Tibial artery (tissue), 4 donors: ENCODE measurements at regions of chr10 and their contacts with region 1.

Region 1: DNA sequence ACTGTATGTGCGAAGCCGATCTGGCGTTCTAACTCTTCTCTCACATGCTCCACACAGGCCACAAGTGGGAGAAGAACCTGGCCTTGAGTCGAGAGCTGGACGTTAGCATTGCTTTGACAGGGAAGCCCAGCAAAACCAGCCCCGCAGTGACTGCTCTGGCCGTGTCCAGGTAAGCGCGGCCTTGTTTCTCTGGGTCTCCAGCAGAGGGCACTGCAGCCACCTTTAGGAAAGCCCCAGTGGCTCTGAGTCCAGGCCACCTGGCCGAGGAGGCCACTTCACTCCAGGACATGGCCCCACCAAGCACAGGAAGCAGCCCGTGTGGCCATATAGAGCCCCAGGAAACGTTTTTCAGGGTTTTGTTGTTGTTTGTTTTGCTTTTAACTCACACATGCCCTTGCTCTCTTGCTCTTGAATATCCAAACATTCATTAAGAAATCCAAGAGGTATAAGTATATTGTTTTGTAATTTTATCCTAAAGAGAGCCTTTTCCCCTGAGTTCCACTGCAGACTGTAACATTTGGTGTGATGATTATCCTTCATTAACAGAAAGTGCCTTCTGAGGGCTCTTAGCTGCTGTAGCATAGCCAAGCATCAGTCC is 41.8 kb upstream of the LRRC18 start:
- DNase-seq: peak; percentile 46 to 74
- H3K4me3 ChIP-seq: no peak overlapping the region
- H3K27ac ChIP-seq: no peak overlapping the region
- H3K4me1 ChIP-seq: no peaks in the 10 kb centered on the region
- H3K27me3 ChIP-seq: no peaks in the 10 kb centered on the region
- CTCF ChIP-seq: peak; percentile 78 to 83

Region 2: DNA sequence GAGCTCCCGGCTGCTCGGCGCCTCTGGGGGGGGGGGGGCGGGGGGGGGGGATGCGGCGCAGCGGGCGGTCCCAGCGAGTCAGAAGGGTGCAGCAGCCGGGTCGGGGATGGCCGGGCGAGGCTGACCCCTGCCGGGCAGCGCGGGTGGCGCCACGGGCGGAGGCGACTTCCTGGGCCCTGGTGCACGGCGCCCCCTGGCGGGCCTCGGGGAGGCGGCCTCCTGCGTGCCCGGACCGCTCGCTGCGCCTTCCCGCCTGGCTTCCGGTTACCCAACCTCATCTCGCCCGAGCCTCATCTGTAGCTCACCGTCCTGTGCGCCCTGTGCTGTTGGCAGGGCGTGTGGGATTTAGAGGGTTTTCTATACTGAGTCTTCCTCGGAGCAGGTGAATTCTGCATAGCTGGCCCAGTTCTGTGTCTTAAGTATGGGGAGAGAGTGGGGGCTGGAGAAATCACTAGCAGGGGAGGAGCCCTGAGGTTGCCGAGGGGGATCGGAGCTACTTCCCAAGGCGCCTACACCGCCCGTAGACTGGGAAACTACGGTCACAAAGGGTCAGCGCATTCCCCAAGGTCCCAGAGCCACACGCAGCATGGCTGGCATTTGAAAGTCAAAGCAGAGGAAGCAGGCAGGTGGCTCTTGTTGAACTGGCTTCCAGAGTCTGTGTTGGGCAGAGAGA is 325.0 kb before region 1 on chr10:
- intact Hi-C with region 1: loop called (anchors 10 kb)
- DNase-seq: peak; percentile 89 to 94
- H3K4me3 ChIP-seq: peak overlapping the region; percentile 63 to 67
- H3K27ac ChIP-seq: peak overlapping the region; percentile 67 to 81
- H3K4me1 ChIP-seq: peaks cover 0 to 16% (median 12%) of the 10 kb centered on the region in 4 donors
- H3K27me3 ChIP-seq: no peaks in the 10 kb centered on the region
- CTCF ChIP-seq: peak; percentile 98 to 100

Region 3: DNA sequence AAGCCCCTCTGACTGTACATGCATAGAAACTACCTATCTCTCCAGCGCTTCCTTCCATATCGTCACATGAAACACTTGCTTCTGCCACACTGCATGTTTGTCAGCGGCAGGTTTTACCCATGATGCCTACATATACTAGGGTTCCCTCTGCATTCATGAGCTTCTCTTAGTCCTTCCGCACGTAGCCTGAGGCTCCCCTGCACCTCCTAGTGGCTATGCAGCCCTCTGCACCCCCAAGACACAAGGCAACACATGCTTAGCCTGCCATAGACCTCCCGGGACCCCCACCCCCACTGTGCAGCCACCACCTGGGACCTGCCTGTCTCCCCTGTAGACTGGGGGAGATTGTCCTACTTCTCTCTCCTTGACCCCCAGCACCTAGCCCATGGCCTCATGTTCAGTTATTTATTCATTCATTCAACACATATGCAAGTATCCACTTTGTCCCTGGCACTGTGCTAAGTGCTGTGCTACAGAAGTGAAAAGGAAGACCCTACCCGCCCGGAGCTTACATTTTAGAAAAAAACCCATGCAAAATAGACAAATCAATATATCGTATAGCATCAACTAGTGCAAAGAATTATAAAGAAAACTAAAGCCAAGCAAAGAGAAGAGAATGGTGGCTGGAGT is 183.3 kb after region 1 on chr10:
- intact Hi-C with region 1: loop called (anchors 2 kb)
- DNase-seq: no peak
- H3K4me3 ChIP-seq: no peak overlapping the region
- H3K27ac ChIP-seq: no peak overlapping the region
- H3K4me1 ChIP-seq: peaks cover 0 to 5% (median 0%) of the 10 kb centered on the region in 4 donors
- H3K27me3 ChIP-seq: no peaks in the 10 kb centered on the region
- CTCF ChIP-seq: peak; percentile 57 to 67

Region 4: GRCh38 chr10:49518982-49519578 is 537.7 kb after region 1 on chr10:
- intact Hi-C with region 1: loop called (anchors 10 kb)
- DNase-seq: no peak
- H3K4me3 ChIP-seq: no peak overlapping the region
- H3K27ac ChIP-seq: no peak overlapping the region
- H3K4me1 ChIP-seq: peaks cover 0 to 7% (median 0%) of the 10 kb centered on the region in 4 donors
- H3K27me3 ChIP-seq: no peaks in the 10 kb centered on the region
- CTCF ChIP-seq: peak; percentile 50 to 52